ENCODE measurements at regions of chr9 and their contacts with region 1.

Region 1: DNA sequence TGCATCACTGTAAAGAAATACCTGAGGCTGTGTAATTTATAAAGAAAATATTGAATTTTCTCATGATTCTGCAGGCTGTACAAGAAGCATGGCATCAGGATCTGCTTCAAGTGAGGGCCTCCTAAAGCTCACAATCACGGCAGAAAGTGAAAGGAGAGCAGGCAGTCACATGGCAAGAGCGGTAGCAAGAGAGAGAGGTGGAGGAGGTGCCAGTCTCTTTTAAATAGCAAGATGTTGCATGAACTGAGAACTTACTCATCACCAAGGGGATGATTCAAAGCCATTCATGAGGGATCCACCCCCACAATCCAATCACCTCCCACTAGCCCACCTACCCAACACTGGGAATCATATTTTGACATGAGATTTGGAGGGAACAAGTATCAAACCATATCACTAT is 184.5 kb upstream of the PAPPA start:
- DNase-seq: no peak
- H3K4me3 ChIP-seq: no peak overlapping the region
- H3K27ac ChIP-seq: no peak overlapping the region
- H3K4me1 ChIP-seq: no peaks in the 10 kb centered on the region
- H3K27me3 ChIP-seq: no peaks in the 10 kb centered on the region
- CTCF ChIP-seq: no peak
- EP300 ChIP-seq: no peak
- POLR2A ChIP-seq: no peak

Region 2: GRCh38 chr9:115712981-115713380 is 256.1 kb before region 1 on chr9:
- intact Hi-C with region 1: no loop called
- DNase-seq: no peak
- H3K4me3 ChIP-seq: no peak overlapping the region
- H3K27ac ChIP-seq: peak overlapping the region in 1 of 4 donors; percentile 20
- H3K4me1 ChIP-seq: no peaks in the 10 kb centered on the region
- H3K27me3 ChIP-seq: no peaks in the 10 kb centered on the region
- CTCF ChIP-seq: no peak
- EP300 ChIP-seq: no peak
- POLR2A ChIP-seq: no peak

Region 3: DNA sequence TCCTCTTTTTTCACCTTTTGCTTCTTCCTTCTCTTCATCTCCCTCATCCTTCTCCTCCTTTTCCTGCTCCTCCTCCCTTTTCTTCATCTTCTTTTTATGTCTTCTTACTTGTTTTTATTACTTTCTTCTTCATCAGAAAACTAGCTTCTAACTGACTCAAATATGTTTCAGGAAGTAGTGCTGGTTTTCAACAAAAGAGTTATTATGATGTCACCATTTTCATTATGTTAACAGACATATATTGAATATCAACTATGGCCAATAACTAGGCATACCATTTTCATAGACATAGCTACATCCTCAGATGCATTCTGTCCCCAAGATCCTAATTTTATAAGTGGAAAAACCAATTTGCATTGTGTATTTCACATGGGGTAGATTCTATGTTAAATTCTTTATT is 68.4 kb before region 1 on chr9:
- intact Hi-C with region 1: loop called (anchors 10 kb)
- DNase-seq: no peak
- H3K4me3 ChIP-seq: no peak overlapping the region
- H3K27ac ChIP-seq: no peak overlapping the region
- H3K4me1 ChIP-seq: no peaks in the 10 kb centered on the region
- H3K27me3 ChIP-seq: no peaks in the 10 kb centered on the region
- CTCF ChIP-seq: no peak
- EP300 ChIP-seq: no peak
- POLR2A ChIP-seq: no peak

Region 4: DNA sequence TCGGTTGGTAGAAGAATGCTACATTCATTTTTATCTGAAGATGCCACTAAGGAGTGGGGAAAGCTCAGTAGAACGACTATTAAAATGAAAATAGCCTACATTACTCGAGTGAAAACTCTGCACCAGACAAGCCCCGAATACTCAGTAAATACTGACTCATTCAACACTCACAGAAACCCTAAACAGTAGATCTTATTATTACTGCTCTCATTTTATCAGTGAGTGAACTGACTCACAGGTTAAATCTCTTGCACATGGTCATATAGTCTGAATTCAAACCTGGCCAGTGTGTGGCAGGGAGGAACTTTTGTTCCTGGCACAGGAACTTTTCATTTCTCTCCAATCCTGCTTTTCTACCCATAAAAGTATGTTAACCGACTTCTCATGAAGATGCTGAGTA is 174.9 kb after region 1 on chr9:
- intact Hi-C with region 1: no loop called
- DNase-seq: no peak
- H3K4me3 ChIP-seq: no peak overlapping the region
- H3K27ac ChIP-seq: no peak overlapping the region
- H3K4me1 ChIP-seq: no peaks in the 10 kb centered on the region
- H3K27me3 ChIP-seq: peaks cover 0 to 29% (median 0%) of the 10 kb centered on the region in 4 donors
- CTCF ChIP-seq: no peak
- EP300 ChIP-seq: no peak
- POLR2A ChIP-seq: no peak

Region 5: DNA sequence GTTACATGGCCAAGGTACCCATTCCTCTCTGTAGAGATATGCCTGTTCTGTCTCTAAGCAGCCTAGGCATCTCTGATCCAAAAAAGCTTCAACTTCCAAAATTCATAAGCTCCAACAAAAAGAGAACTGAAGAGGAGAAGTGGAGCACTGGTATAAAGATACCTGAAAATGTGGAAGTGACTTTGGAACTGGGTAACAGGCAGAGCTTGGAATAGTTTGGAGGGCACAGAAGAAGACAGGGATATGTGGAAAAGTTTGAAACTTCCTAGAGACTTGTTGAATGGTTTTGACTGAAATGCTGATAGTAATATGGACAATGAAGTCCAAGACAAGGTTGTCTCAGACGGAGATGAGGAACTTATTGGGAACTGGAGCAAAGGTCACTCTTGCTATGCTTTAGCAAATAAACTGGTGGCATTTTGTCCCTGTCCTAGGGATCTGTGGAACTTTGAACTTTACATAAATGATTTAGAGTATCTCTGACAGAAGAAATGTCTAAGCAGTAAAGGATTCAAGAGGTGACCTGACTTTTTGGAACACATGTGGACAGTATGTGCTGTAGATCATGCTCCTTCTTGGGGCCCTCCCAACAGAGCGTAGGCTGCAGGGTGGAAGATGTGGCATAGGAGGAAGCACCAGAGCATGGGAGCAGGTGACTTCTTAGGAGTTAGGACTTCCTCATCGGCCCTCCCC is 555.8 kb after region 1 on chr9:
- intact Hi-C with region 1: no loop called
- DNase-seq: no peak
- H3K4me3 ChIP-seq: no peak overlapping the region
- H3K27ac ChIP-seq: no peak overlapping the region
- H3K4me1 ChIP-seq: no peaks in the 10 kb centered on the region
- H3K27me3 ChIP-seq: no peaks in the 10 kb centered on the region
- CTCF ChIP-seq: no peak
- EP300 ChIP-seq: no peak
- POLR2A ChIP-seq: no peak

Measured in esophagus muscularis mucosa (tissue), 4 donors.